ENCODE measurements at regions of chr17 and their contacts with region 1.

Region 1: DNA sequence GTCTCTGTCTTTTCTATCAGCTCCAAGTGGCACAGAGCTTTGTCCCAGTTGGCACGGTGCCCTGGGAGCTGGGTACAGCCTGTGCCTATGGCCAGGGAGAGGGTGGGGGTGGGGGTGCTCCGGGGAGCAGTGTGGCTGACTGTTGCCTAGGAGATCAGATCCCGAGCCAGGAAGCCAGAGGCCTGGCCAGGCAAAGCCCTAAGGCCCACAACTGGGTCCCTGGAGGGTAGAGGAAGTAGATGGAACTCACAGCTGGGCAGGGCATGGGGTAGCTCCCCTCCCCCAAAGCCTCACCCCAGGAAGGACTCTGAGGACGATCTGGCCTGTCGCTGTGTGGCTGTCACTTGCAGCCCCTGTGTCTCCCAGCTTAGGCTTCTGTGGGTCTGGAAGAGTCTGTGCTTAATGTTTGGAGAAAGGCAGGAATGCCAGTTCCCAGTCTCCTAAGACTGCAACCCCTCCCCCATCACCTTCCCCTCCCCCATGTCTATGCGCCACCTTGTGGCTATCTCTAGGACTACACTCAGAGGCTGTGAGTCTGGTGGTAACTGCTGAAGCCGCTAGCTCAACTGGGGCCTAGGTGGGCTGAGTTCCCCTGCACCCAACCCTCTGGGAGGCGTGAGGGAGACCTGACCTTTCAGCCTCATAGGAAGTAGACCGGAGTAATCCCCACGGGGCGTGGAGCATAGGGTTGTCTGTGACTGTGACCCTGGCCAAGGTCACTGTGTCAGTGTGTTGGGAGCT is 12.6 kb downstream of the THRA start:
- DNase-seq: no peak
- H3K4me3 ChIP-seq: no peak overlapping the region
- CTCF ChIP-seq: peak; percentile 89

Region 2: GRCh38 chr17:40015005-40015997 is 60.1 kb before region 1 on chr17 and contains the start of gene CSF3:
- CTCF ChIA-PET with region 1: interaction called, 29 read pairs
- POLR2A ChIA-PET with region 1: no interaction called
- DNase-seq: no peak
- H3K4me3 ChIP-seq: no peak within 1 kb of the TSS
- CTCF ChIP-seq: no peak

Region 3: GRCh38 chr17:40038882-40039513 is 36.4 kb before region 1 on chr17:
- CTCF ChIA-PET with region 1: interaction called, 47 read pairs
- POLR2A ChIA-PET with region 1: no interaction called
- DNase-seq: peak; percentile 42
- H3K4me3 ChIP-seq: no peak overlapping the region
- CTCF ChIP-seq: peak; percentile 79

Region 4: DNA sequence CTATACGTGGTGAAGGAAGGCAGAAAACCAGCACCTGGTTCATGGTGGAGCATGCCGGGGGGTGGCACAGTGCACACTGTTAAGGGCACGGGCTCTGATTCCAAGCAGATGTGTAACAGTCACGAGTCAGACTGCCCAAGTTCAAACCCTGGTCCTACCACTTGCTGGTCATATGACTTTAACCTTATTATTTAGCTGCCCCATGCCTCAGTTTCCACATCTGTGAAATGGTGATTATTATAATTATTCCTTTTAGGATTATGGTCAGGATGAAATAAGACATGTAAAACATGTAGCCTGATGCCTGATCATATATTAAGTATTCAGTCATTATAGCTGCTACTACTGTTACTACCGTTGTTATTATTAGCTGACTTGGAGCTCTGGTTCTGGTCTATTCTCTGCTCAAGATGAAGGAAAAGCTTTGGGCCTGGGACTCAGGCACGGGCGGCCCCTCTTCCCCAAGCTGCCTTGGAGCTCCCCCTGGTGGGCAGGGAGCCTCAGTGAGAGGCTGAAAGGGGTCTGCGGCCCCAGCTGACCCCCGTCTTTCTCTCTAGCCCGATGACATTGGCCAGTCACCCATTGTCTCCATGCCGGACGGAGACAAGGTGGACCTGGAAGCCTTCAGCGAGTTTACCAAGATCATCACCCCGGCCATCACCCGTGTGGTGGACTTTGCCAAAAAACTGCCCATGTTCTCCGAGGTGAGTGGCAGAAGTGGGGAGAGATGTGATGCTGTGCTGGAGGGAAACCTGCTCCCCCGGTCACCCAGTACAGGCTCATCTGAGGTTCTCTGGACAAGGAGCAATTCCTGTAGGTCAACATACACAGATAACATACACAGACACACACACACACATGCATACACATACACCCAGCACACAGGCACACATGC is 11.0 kb after region 1 on chr17:
- CTCF ChIA-PET with region 1: interaction called, 273 read pairs
- POLR2A ChIA-PET with region 1: interaction called, 3 read pairs
- DNase-seq: no peak
- H3K4me3 ChIP-seq: no peak overlapping the region
- CTCF ChIP-seq: peak; percentile 75

Region 5: GRCh38 chr17:40121181-40122135 is 46.1 kb after region 1 on chr17 and contains the start of gene MSL1:
- CTCF ChIA-PET with region 1: interaction called, 15 read pairs
- POLR2A ChIA-PET with region 1: no interaction called
- DNase-seq: no peak
- H3K4me3 ChIP-seq: peak within 1 kb of the TSS; percentile 92
- CTCF ChIP-seq: no peak